ENCODE measurements at regions of chr11 and their contacts with region 1.

Region 1: GRCh38 chr11:32972781-32973180 is 42.9 kb upstream of the DEPDC7 start:
- DNase-seq: no peak
- ATAC-seq: no peak
- H3K4me3 ChIP-seq: no peak overlapping the region
- H3K27ac ChIP-seq: no peak overlapping the region
- H3K4me1 ChIP-seq: no peaks in the 10 kb centered on the region
- H3K27me3 ChIP-seq: no peaks in the 10 kb centered on the region
- CTCF ChIP-seq: no peak

Region 2: GRCh38 chr11:32580967-32581366 is 391.8 kb before region 1 on chr11:
- intact Hi-C with region 1: no loop called
- DNase-seq: no peak
- ATAC-seq: no peak
- H3K4me3 ChIP-seq: no peak overlapping the region
- H3K27ac ChIP-seq: no peak overlapping the region
- H3K4me1 ChIP-seq: peaks cover 9% of the 10 kb centered on the region
- H3K27me3 ChIP-seq: no peaks in the 10 kb centered on the region
- CTCF ChIP-seq: no peak

Region 3: DNA sequence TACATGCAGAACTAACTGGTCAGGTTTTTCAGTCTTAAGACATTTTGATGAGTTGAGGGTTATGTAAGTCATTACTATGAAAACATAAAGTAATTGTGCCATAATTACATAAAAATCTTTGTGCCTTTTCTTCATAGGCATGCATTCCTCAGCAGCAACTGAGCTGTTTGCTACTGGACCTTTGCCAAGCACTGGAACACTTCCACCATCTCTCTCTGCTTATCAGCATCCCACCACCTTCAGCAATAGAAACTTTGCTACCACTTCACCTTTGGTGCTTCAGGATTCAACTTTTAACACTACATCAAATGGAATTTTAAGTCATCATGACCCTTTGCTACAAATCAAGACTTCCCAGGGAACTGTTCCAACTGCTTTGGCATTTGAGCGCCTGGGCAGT is 41.2 kb before region 1 on chr11:
- intact Hi-C with region 1: no loop called
- DNase-seq: no peak
- ATAC-seq: no peak
- H3K4me3 ChIP-seq: no peak overlapping the region
- H3K27ac ChIP-seq: no peak overlapping the region
- H3K4me1 ChIP-seq: no peaks in the 10 kb centered on the region
- H3K27me3 ChIP-seq: no peaks in the 10 kb centered on the region
- CTCF ChIP-seq: no peak

Region 4: DNA sequence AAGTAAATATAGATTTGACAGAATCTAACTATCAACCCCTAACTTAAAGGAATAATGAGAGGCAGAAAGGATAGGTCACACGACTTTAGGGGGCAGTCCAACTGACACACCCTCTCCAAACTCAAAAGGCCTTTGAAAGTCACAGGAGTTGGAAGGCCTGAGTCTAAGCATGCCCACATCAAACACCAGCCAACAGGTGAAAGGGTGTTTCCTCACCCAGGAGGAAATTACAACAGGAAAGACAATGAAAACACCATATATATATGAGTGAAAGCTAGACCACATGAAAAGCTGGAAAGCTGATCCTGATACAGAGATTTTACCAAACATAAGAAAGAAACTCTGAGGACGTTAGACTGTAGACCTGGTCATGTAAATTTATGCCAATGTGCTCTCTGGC is 32.4 kb after region 1 on chr11:
- intact Hi-C with region 1: loop called in 1 of 2 experiments (anchors 2 kb)
- DNase-seq: no peak
- ATAC-seq: no peak
- H3K4me3 ChIP-seq: no peak overlapping the region
- H3K27ac ChIP-seq: no peak overlapping the region
- H3K4me1 ChIP-seq: no peaks in the 10 kb centered on the region
- H3K27me3 ChIP-seq: no peaks in the 10 kb centered on the region
- CTCF ChIP-seq: no peak

Measured in psoas muscle (tissue), 8 donors.